ENCODE measurements at regions of chr7 and their contacts with region 1.

Region 1: DNA sequence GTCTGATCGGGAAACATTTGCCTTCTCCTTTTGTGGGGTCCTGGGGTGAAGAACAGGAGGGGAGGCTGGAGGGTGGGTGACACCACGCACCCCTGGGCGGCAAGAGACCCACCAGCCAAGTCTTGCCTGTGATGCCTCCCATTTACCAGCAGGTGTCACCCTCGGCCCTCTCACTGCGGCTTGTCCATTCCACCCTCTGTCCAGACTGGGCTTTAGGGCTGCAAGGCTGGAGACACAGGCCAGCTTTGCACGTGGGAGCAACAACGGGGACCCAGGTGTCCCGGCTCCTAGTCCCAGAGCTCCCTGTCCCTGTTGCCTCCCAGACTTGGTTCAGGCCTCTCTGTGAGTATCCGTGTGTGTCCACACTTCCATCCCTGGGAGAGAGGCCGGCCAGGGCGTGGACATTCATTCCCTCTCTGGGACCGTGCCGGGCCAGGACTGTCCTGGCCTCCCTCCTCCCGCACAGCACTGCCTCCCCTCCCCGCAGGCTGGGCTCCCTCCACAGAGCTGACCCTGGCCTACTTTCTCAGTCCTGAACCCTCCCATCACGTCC is 36.2 kb upstream of the GTF2IRD1 start:
- DNase-seq: peak; percentile 64 to 69
- ATAC-seq: peak; percentile 84 to 94 (median 92)
- H3K4me3 ChIP-seq: no peak overlapping the region
- H3K27ac ChIP-seq: no peak overlapping the region
- H3K4me1 ChIP-seq: peaks cover 0 to 7% (median 0%) of the 10 kb centered on the region in 9 donors
- H3K27me3 ChIP-seq: peaks cover 0 to 5% (median 0%) of the 10 kb centered on the region in 7 donors
- CTCF ChIP-seq: peak; percentile 92 to 98 (median 96)

Region 2: GRCh38 chr7:75048435-75049379 is 631.2 kb after region 1 on chr7:
- intact Hi-C with region 1: loop called in 2 of 10 experiments (anchors 10 kb)
- DNase-seq: no peak
- ATAC-seq: peak in 2 of 8 donors; percentile 3 to 13
- H3K4me3 ChIP-seq: no peak overlapping the region
- H3K27ac ChIP-seq: no peak overlapping the region
- H3K4me1 ChIP-seq: peaks cover 0 to 11% (median 0%) of the 10 kb centered on the region in 9 donors
- H3K27me3 ChIP-seq: no peaks in the 10 kb centered on the region
- CTCF ChIP-seq: no peak

Measured in heart right ventricle (tissue), 16 donors.